Caco-2 (cell line): ENCODE measurements at regions of chr11 and their contacts with region 1.

Region 1: DNA sequence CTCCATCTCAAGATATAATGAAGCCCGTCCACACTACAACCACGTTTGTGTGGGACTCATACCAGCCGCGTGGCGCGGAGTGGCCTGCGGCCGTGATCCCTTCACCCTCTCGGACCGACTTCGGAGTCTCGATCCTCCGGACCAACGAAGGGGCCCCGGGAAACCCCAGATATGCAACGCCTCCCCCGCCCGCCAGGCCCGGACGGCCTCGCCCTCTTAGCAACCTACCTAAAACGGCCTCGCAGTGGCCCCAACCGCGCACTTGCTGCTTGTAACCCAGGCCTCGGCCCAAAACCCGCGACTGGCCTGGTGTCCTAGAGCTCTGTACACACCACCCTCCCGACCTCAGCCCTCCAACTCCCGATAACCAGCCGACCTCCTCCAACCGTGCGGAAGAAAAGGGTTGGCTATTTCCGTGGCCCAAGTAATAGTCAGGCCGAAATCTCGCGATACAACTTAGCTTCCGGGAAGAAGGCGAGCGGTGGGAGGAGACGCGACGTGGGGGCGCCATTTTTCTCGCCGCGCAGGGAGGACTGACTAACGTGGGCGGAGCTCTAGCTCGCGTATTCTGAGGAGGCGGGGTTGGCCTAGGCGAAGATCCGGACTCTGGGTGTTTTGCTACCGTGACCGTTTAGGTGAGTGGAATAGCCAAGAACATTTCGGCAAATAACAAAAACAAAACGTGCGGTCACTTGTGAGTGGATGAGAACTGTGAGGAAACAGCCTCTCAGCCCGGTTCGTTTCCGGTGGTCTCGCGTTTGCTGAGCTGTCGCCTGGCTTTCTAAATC is at the starts of genes C11orf54 and TAF1D:
- DNase-seq: peak; percentile 100
- H3K4me3 ChIP-seq: peak within 1 kb of the TSS; percentile 74
- H3K4me3 Mint-ChIP-seq: peak within 1 kb of the TSS; percentile 89
- H3K27ac Mint-ChIP-seq: peak within 1 kb of the TSS; percentile 98
- H3K4me1 ChIP-seq: peaks cover 52% of the 10 kb centered on the region
- H3K4me1 Mint-ChIP-seq: peaks cover 59% of the 10 kb centered on the region
- H3K27me3 ChIP-seq: no peaks in the 10 kb centered on the region
- H3K27me3 Mint-ChIP-seq: no peaks in the 10 kb centered on the region
- CTCF ChIP-seq: peak in 1 of 2 experiments; percentile 35
- total RNA-seq, gene C11orf54: 20.7 and 21.5 TPM in 2 replicates
- total RNA-seq, gene TAF1D: 354 and 376 TPM in 2 replicates

Region 2: GRCh38 chr11:93295921-93296575 is 445.2 kb before region 1 on chr11:
- CTCF ChIA-PET with region 1: no interaction called
- POLR2A ChIA-PET with region 1: no interaction called
- intact Hi-C with region 1: no loop called
- DNase-seq: no peak
- H3K4me3 ChIP-seq: no peak overlapping the region
- H3K4me3 Mint-ChIP-seq: no peak overlapping the region
- H3K27ac Mint-ChIP-seq: no peak overlapping the region
- H3K4me1 ChIP-seq: no peaks in the 10 kb centered on the region
- H3K4me1 Mint-ChIP-seq: no peaks in the 10 kb centered on the region
- H3K27me3 ChIP-seq: no peaks in the 10 kb centered on the region
- H3K27me3 Mint-ChIP-seq: peaks cover 12% of the 10 kb centered on the region
- CTCF ChIP-seq: no peak

Region 3: DNA sequence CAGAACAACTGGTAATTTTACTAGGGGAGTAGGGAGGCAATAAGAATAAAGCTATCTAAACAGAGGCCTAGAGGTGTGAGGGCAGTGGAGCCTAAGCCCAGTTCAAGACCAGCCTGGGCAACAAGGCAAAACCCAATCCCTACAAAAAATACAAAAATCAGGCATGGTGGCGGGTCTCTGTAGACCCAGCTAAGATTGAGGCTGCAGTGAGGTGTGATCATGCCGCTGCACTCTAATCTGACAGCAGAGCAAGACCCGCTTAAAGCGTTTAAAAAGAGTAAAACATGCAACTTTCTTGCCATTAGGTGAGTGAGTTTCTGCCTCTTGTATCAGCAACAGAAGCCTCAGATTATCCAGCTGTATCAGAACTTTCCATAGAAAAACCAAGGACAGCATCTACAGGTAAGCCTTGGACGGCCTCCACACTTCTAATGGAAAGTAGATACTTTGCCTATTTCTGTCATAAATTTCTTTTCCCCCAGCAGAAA is 12.1 kb before region 1 on chr11:
- CTCF ChIA-PET with region 1: no interaction called
- POLR2A ChIA-PET with region 1: interaction called, 10 read pairs
- intact Hi-C with region 1: no loop called
- DNase-seq: no peak
- H3K4me3 ChIP-seq: no peak overlapping the region
- H3K4me3 Mint-ChIP-seq: no peak overlapping the region
- H3K27ac Mint-ChIP-seq: peak overlapping the region; percentile 15
- H3K4me1 ChIP-seq: 0 out of 2 replicates have a peak, but pooled peaks cover 9% of the 10 kb centered on the region
- H3K4me1 Mint-ChIP-seq: peaks cover 13% of the 10 kb centered on the region
- H3K27me3 ChIP-seq: no peaks in the 10 kb centered on the region
- H3K27me3 Mint-ChIP-seq: no peaks in the 10 kb centered on the region
- CTCF ChIP-seq: no peak

Region 4: DNA sequence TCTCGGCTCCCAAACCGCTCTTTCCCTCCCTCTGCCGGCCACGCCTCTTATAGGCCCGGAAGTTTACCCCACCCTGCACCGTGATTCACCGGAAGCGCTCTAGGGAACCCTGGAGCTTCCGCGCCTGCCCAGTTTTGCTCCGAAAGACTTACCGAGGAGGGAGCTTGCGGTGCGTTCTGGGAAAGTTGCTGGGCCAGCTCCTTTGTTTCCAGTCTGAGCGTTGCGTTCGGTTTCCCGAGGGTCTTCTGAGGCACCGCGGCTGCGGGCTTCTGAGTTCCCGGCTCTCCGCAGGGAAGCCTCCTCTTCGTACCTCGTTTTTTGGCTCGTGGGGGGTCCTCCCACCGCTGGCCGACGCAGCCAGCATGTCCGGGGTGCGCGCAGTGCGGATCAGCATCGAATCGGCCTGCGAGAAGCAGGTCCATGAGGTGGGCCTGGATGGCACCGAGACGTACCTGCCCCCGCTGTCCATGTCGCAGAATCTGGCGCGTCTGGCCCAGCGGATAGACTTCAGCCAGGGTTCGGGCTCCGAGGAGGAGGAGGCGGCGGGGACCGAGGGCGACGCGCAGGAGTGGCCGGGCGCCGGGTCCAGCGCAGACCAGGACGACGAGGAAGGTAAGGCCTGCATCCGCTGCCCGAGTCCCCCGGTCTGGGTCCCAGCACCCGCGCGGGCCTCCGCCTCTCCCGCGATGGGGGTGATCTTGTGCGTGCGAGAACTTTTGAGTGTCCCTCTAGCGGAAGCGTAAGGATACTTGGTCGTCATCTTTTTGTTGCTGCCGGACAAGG is 43.1 kb after region 1 on chr11 and contains the start of gene MED17:
- CTCF ChIA-PET with region 1: interaction called, 57 read pairs
- POLR2A ChIA-PET with region 1: interaction called, 130 read pairs
- intact Hi-C with region 1: loop called (anchors 1 kb)
- DNase-seq: peak; percentile 96
- H3K4me3 ChIP-seq: peak within 1 kb of the TSS; percentile 86
- H3K4me3 Mint-ChIP-seq: peak within 1 kb of the TSS; percentile 81
- H3K27ac Mint-ChIP-seq: peak within 1 kb of the TSS; percentile 62
- H3K4me1 ChIP-seq: no peaks in the 10 kb centered on the region; the same call in 1 of the 2 replicates
- H3K4me1 Mint-ChIP-seq: peaks cover 17% of the 10 kb centered on the region
- H3K27me3 ChIP-seq: no peaks in the 10 kb centered on the region
- H3K27me3 Mint-ChIP-seq: no peaks in the 10 kb centered on the region
- CTCF ChIP-seq: peak; percentile 72 to 76
- total RNA-seq, gene MED17: 54.0 and 63.5 TPM in 2 replicates

Region 5: DNA sequence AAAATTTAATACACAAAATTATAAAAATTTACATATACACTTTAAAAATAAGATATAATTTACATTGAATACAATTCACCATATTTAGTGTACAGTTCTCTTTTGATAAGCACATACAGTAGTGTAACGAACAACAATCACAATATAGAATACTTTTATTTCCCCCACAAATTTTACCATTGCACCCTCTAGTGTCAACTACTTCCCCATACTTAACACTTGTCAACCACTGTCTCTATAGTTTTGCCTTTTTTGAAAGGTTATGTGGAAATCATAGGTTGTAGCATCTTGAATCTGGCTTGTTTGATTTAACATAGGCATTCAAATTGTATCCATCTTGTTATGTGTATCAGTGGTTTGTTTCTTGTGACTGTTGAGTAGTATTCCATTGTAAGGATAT is 366.1 kb after region 1 on chr11:
- CTCF ChIA-PET with region 1: no interaction called
- POLR2A ChIA-PET with region 1: no interaction called
- intact Hi-C with region 1: no loop called
- DNase-seq: no peak
- H3K4me3 ChIP-seq: no peak overlapping the region
- H3K4me3 Mint-ChIP-seq: no peak overlapping the region
- H3K27ac Mint-ChIP-seq: no peak overlapping the region
- H3K4me1 ChIP-seq: no peaks in the 10 kb centered on the region
- H3K4me1 Mint-ChIP-seq: no peaks in the 10 kb centered on the region
- H3K27me3 ChIP-seq: no peaks in the 10 kb centered on the region; the same call in 1 of the 2 replicates
- H3K27me3 Mint-ChIP-seq: no peaks in the 10 kb centered on the region
- CTCF ChIP-seq: peak in 1 of 2 experiments; percentile 24

Region 6: DNA sequence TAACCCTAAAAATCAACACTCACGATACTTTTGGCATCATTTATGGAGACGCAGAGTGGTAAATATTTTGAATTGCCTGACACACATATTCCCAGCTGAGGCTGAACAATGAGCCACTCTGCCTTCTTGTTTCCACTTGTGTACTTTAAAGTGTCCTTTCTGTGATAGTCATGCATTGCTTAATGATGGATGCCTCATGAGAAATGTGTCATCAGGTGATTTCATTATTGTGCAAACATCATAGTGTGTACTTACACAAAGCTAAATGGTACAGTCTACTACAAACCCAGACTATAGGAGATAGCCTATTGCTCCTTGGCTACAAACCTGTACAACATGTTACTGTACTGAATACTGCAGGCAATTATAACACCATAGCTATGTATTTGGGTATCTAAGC is 708.1 kb after region 1 on chr11:
- CTCF ChIA-PET with region 1: no interaction called
- POLR2A ChIA-PET with region 1: interaction called, 10 read pairs
- intact Hi-C with region 1: no loop called
- DNase-seq: peak in 1 of 2 experiments; percentile 19
- H3K4me3 ChIP-seq: no peak overlapping the region
- H3K4me3 Mint-ChIP-seq: no peak overlapping the region
- H3K27ac Mint-ChIP-seq: no peak overlapping the region
- H3K4me1 ChIP-seq: peaks cover 5% of the 10 kb centered on the region; the same call in 1 of the 2 replicates
- H3K4me1 Mint-ChIP-seq: no peaks in the 10 kb centered on the region
- H3K27me3 ChIP-seq: no peaks in the 10 kb centered on the region
- H3K27me3 Mint-ChIP-seq: no peaks in the 10 kb centered on the region
- CTCF ChIP-seq: no peak